Ascending aorta (tissue), 2 donors: ENCODE measurements at regions of chr1 and their contacts with region 1.

Region 1: GRCh38 chr1:180003026-180003695 is 48.6 kb downstream of the CEP350 start:
- DNase-seq: no peak
- H3K4me3 ChIP-seq: no peak overlapping the region
- H3K27ac ChIP-seq: peak overlapping the region; percentile 39 to 59
- H3K4me1 ChIP-seq: peaks cover 0 to 7% of the 10 kb centered on the region in 2 donors
- H3K27me3 ChIP-seq: no peaks in the 10 kb centered on the region
- CTCF ChIP-seq: no peak

Region 2: GRCh38 chr1:179917601-179918429 is 85.3 kb before region 1 on chr1:
- intact Hi-C with region 1: loop called (anchors 10 kb)
- DNase-seq: no peak
- H3K4me3 ChIP-seq: no peak overlapping the region
- H3K27ac ChIP-seq: no peak overlapping the region
- H3K4me1 ChIP-seq: no peaks in the 10 kb centered on the region
- H3K27me3 ChIP-seq: no peaks in the 10 kb centered on the region
- CTCF ChIP-seq: no peak

Region 3: GRCh38 chr1:179968994-179969919 is 33.9 kb before region 1 on chr1:
- intact Hi-C with region 1: loop called (anchors 5 kb)
- DNase-seq: no peak
- H3K4me3 ChIP-seq: peak overlapping the region; percentile 17 to 19
- H3K27ac ChIP-seq: peak overlapping the region; percentile 78 to 85
- H3K4me1 ChIP-seq: peaks cover 9 to 36% of the 10 kb centered on the region in 2 donors
- H3K27me3 ChIP-seq: no peaks in the 10 kb centered on the region
- CTCF ChIP-seq: no peak